GM12878 (cell line): ENCODE measurements at regions of chr1 and their contacts with region 1.

Region 1: GRCh38 chr1:165842671-165843129 is 15.3 kb downstream of the UCK2 start:
- DNase-seq: no peak
- ATAC-seq: peak; percentile 57
- H3K4me3 ChIP-seq: no peak overlapping the region
- H3K27ac ChIP-seq: peak overlapping the region; percentile 70
- H3K4me1 ChIP-seq: peaks cover 32% of the 10 kb centered on the region
- H3K27me3 ChIP-seq: no peaks in the 10 kb centered on the region
- CTCF ChIP-seq: no peak
- EP300 ChIP-seq: no peak
- POLR2A ChIP-seq: no peak
- RAD21 ChIP-seq: no peak

Region 2: DNA sequence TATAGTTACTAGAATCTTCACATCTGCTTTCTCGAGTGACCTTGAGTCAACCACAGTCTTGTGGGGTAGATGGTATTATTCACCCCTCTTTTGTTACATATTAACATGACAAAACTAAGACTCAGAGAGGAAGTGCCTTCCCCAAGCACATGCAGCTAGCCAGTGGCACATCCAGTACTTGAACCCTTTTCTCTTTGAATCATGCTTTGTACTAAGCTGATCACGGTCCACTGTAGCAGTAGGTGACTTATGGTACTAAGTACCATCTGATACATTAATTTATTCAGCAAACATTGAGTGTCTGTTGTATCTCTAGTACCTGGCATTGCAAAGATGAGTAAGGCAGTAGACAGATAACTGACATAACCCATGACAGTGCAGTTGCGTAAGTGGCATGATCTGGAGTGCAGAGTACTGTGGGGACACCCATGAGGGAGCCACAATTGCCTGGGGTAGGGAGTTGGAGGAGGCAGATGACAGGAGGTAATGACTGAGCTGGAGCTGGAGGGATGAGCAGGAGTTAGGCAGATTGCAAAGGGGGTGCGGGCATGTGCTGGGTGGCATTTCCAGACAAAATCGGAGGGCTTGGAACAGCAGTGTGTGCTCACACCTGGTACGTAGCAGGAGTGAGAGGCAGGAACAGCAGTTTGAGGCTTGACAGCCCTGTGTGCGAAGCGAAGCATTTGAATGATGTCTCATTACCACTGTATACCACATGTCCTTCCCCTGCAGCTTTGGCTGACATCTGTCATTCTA is 14.5 kb after region 1 on chr1:
- CTCF ChIA-PET with region 1: interaction called, 5 read pairs
- POLR2A ChIA-PET with region 1: interaction called, 8 read pairs
- RAD21 ChIA-PET with region 1: interaction called, 11 read pairs
- SMC1A ChIA-PET with region 1: interaction called, 19 read pairs
- in situ Hi-C with region 1: no loop called
- intact Hi-C with region 1: no loop called
- DNase-seq: no peak
- ATAC-seq: peak; percentile 90
- H3K4me3 ChIP-seq: no peak overlapping the region
- H3K27ac ChIP-seq: peak overlapping the region; percentile 38; the same call in 1 of the 2 replicates
- H3K4me1 ChIP-seq: peaks cover 32% of the 10 kb centered on the region
- H3K27me3 ChIP-seq: no peaks in the 10 kb centered on the region
- CTCF ChIP-seq: no peak
- EP300 ChIP-seq: peak in 1 of 2 experiments; percentile 7; a peak in 1 of 4 replicates
- POLR2A ChIP-seq: no peak
- RAD21 ChIP-seq: no peak

Region 3: DNA sequence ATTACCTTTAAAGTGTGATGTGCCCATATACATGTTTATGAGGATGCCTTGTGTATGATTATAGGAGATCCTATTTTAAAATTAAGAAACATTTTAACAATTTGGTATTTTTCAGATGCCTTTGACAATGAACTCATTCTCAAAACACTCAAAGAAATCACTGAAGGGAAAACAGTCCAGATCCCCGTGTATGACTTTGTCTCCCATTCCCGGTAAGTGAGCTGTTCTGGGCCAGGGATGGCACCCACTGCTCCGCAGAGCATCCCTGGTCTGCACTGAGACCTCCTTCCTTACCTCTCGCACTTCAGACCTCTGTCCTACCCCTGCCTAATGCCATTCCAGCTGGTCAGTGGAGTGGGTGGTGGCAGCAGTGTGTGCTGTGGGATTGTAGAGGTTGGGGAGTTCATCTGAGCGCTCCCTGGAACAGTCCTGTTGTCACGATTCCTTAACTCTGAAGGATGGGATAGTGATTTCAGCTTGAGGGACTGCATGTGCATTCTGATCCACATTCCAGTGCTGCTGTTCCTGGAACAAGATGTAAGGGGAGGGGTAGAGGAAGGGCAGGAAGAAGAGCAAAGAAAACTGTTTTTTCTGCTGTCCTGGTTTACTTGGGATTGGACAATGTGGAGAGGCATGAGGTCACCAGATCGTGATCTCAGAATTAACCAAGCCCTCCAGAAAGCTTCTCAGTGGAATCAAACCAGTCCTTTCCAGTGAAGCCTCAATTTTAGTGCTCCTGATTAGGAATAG is 48.6 kb after region 1 on chr1:
- CTCF ChIA-PET with region 1: no interaction called
- POLR2A ChIA-PET with region 1: no interaction called
- RAD21 ChIA-PET with region 1: no interaction called
- SMC1A ChIA-PET with region 1: no interaction called
- in situ Hi-C with region 1: no loop called
- intact Hi-C with region 1: no loop called
- DNase-seq: no peak
- ATAC-seq: no peak
- H3K4me3 ChIP-seq: no peak overlapping the region
- H3K27ac ChIP-seq: no peak overlapping the region
- H3K4me1 ChIP-seq: peaks cover 12% of the 10 kb centered on the region
- H3K27me3 ChIP-seq: no peaks in the 10 kb centered on the region
- CTCF ChIP-seq: no peak
- EP300 ChIP-seq: no peak
- POLR2A ChIP-seq: no peak
- RAD21 ChIP-seq: no peak

Region 4: GRCh38 chr1:166343276-166343675 is 500.6 kb after region 1 on chr1:
- CTCF ChIA-PET with region 1: no interaction called
- POLR2A ChIA-PET with region 1: no interaction called
- RAD21 ChIA-PET with region 1: no interaction called
- SMC1A ChIA-PET with region 1: no interaction called
- in situ Hi-C with region 1: no loop called
- intact Hi-C with region 1: no loop called
- DNase-seq: no peak
- ATAC-seq: no peak
- H3K4me3 ChIP-seq: no peak overlapping the region
- H3K27ac ChIP-seq: no peak overlapping the region
- H3K4me1 ChIP-seq: no peaks in the 10 kb centered on the region
- H3K27me3 ChIP-seq: no peaks in the 10 kb centered on the region
- CTCF ChIP-seq: no peak
- EP300 ChIP-seq: no peak
- POLR2A ChIP-seq: no peak
- RAD21 ChIP-seq: no peak